GM12878 (cell line): ENCODE measurements at regions of chrX and their contacts with region 1.

Region 1: GRCh38 chrX:63275127-63275526 is 76.0 kb downstream of the SPIN4 start:
- DNase-seq: peak; percentile 7
- ATAC-seq: peak; percentile 86
- H3K4me3 ChIP-seq: no peak overlapping the region
- H3K27ac ChIP-seq: no peak overlapping the region
- H3K4me1 ChIP-seq: no peaks in the 10 kb centered on the region
- H3K27me3 ChIP-seq: no peaks in the 10 kb centered on the region
- CTCF ChIP-seq: peak; percentile 61 to 72 (median 69)
- EP300 ChIP-seq: no peak
- POLR2A ChIP-seq: no peak
- RAD21 ChIP-seq: peak; percentile 75

Region 2: GRCh38 chrX:63101879-63102620 is 173.1 kb before region 1 on chrX:
- CTCF ChIA-PET with region 1: no interaction called
- POLR2A ChIA-PET with region 1: no interaction called
- RAD21 ChIA-PET with region 1: no interaction called
- SMC1A ChIA-PET with region 1: no interaction called
- in situ Hi-C with region 1: no loop called
- intact Hi-C with region 1: no loop called
- DNase-seq: peak; percentile 33
- ATAC-seq: peak; percentile 92
- H3K4me3 ChIP-seq: no peak overlapping the region
- H3K27ac ChIP-seq: peak overlapping the region; percentile 50
- H3K4me1 ChIP-seq: no peaks in the 10 kb centered on the region; the same call in 1 of the 2 replicates
- H3K27me3 ChIP-seq: no peaks in the 10 kb centered on the region
- CTCF ChIP-seq: no peak
- EP300 ChIP-seq: no peak
- POLR2A ChIP-seq: no peak
- RAD21 ChIP-seq: no peak

Region 3: DNA sequence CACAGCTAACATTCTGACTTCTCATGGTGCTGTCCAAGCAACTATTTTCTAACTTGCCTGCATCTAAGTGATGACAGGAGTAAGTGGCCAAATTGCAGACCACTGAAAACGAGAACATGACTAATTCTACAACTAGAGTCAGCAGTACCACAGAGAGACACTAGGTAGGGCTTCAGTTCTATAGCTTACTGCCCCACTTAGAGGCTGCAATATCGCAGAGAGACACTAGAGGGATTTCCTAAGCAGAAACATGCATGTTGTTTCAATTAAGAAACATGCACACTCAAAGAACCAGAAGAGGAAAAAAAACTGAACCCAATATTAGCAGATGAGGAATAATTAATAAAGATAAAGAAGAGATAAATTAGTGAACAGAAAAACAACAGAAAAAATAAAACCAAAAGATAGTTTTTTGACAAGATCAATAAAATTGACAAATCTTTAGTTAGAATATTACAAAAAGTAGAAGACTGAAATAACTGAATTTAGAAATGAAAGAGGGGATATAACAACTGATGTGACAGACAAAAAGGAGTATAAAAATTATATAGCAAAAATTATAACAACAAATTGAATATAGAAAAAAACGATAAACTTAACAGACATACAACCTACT is 24.8 kb before region 1 on chrX:
- CTCF ChIA-PET with region 1: interaction called, 12 read pairs
- POLR2A ChIA-PET with region 1: no interaction called
- RAD21 ChIA-PET with region 1: interaction called, 3 read pairs
- SMC1A ChIA-PET with region 1: interaction called, 4 read pairs
- in situ Hi-C with region 1: no loop called
- intact Hi-C with region 1: no loop called
- DNase-seq: peak; percentile 60
- ATAC-seq: peak; percentile 100
- H3K4me3 ChIP-seq: no peak overlapping the region
- H3K27ac ChIP-seq: no peak overlapping the region
- H3K4me1 ChIP-seq: no peaks in the 10 kb centered on the region
- H3K27me3 ChIP-seq: no peaks in the 10 kb centered on the region
- CTCF ChIP-seq: peak; percentile 81 to 94 (median 90)
- EP300 ChIP-seq: no peak; a peak in 1 of 4 replicates
- POLR2A ChIP-seq: no peak
- RAD21 ChIP-seq: peak; percentile 85

Region 4: GRCh38 chrX:63506320-63506719 is 231.2 kb after region 1 on chrX:
- CTCF ChIA-PET with region 1: interaction called, 15 read pairs
- POLR2A ChIA-PET with region 1: no interaction called
- RAD21 ChIA-PET with region 1: no interaction called
- SMC1A ChIA-PET with region 1: no interaction called
- in situ Hi-C with region 1: no loop called
- intact Hi-C with region 1: no loop called
- DNase-seq: no peak
- ATAC-seq: peak; percentile 65
- H3K4me3 ChIP-seq: no peak overlapping the region
- H3K27ac ChIP-seq: no peak overlapping the region
- H3K4me1 ChIP-seq: no peaks in the 10 kb centered on the region
- H3K27me3 ChIP-seq: no peaks in the 10 kb centered on the region
- CTCF ChIP-seq: peak in 2 of 3 experiments; percentile 29 to 39; a peak in 3 of 6 replicates
- EP300 ChIP-seq: no peak
- POLR2A ChIP-seq: no peak
- RAD21 ChIP-seq: peak; percentile 52

Region 5: GRCh38 chrX:63560601-63561218 is 285.6 kb after region 1 on chrX:
- CTCF ChIA-PET with region 1: no interaction called
- POLR2A ChIA-PET with region 1: no interaction called
- RAD21 ChIA-PET with region 1: no interaction called
- SMC1A ChIA-PET with region 1: no interaction called
- in situ Hi-C with region 1: no loop called
- intact Hi-C with region 1: no loop called
- DNase-seq: peak; percentile 27
- ATAC-seq: peak; percentile 97
- H3K4me3 ChIP-seq: peak overlapping the region; percentile 77
- H3K27ac ChIP-seq: peak overlapping the region; percentile 22
- H3K4me1 ChIP-seq: no peaks in the 10 kb centered on the region
- H3K27me3 ChIP-seq: no peaks in the 10 kb centered on the region
- CTCF ChIP-seq: no peak
- EP300 ChIP-seq: no peak
- POLR2A ChIP-seq: peak; percentile 68
- RAD21 ChIP-seq: no peak

Region 6: GRCh38 chrX:63686878-63687714 is 412.0 kb after region 1 on chrX:
- CTCF ChIA-PET with region 1: interaction called, 4 read pairs
- POLR2A ChIA-PET with region 1: no interaction called
- RAD21 ChIA-PET with region 1: no interaction called
- SMC1A ChIA-PET with region 1: interaction called, 4 read pairs
- in situ Hi-C with region 1: no loop called
- intact Hi-C with region 1: loop called (anchors 5 kb)
- DNase-seq: peak; percentile 20
- ATAC-seq: peak; percentile 92
- H3K4me3 ChIP-seq: no peak overlapping the region
- H3K27ac ChIP-seq: no peak overlapping the region
- H3K4me1 ChIP-seq: no peaks in the 10 kb centered on the region
- H3K27me3 ChIP-seq: no peaks in the 10 kb centered on the region
- CTCF ChIP-seq: peak; percentile 58 to 72 (median 69)
- EP300 ChIP-seq: no peak
- POLR2A ChIP-seq: no peak
- RAD21 ChIP-seq: peak; percentile 72